PC-9 (cell line): ENCODE measurements at regions of chr18 and their contacts with region 1.

Region 1: GRCh38 chr18:9575558-9575957 is 38.8 kb downstream of the PPP4R1 start:
- DNase-seq: peak; percentile 75 to 85
- H3K4me3 ChIP-seq: no peak overlapping the region
- H3K27ac ChIP-seq: peak overlapping the region; percentile 53
- H3K4me1 ChIP-seq: peaks cover 6% of the 10 kb centered on the region
- H3K27me3 ChIP-seq: no peaks in the 10 kb centered on the region
- CTCF ChIP-seq: peak; percentile 90

Region 2: GRCh38 chr18:9565407-9565806 is 10.2 kb before region 1 on chr18:
- CTCF ChIA-PET with region 1: no interaction called
- POLR2A ChIA-PET with region 1: interaction called, 17 read pairs
- intact Hi-C with region 1: no loop called
- DNase-seq: no peak
- H3K4me3 ChIP-seq: no peak overlapping the region
- H3K27ac ChIP-seq: no peak overlapping the region
- H3K4me1 ChIP-seq: no peaks in the 10 kb centered on the region
- H3K27me3 ChIP-seq: no peaks in the 10 kb centered on the region
- CTCF ChIP-seq: no peak

Region 3: GRCh38 chr18:9661564-9661963 is 86.0 kb after region 1 on chr18:
- CTCF ChIA-PET with region 1: interaction called, 10 read pairs
- POLR2A ChIA-PET with region 1: no interaction called
- intact Hi-C with region 1: no loop called
- DNase-seq: no peak
- H3K4me3 ChIP-seq: no peak overlapping the region
- H3K27ac ChIP-seq: no peak overlapping the region
- H3K4me1 ChIP-seq: peaks cover 35% of the 10 kb centered on the region
- H3K27me3 ChIP-seq: no peaks in the 10 kb centered on the region
- CTCF ChIP-seq: no peak

Region 4: GRCh38 chr18:9683407-9684396 is 108.1 kb after region 1 on chr18:
- CTCF ChIA-PET with region 1: interaction called, 27 read pairs
- POLR2A ChIA-PET with region 1: interaction called, 3 read pairs
- intact Hi-C with region 1: loop called (anchors 1 kb)
- DNase-seq: peak; percentile 75 to 76
- H3K4me3 ChIP-seq: peak overlapping the region; percentile 15; the same call in 1 of the 2 replicates
- H3K27ac ChIP-seq: peak overlapping the region; percentile 56
- H3K4me1 ChIP-seq: peaks cover 32% of the 10 kb centered on the region
- H3K27me3 ChIP-seq: no peaks in the 10 kb centered on the region
- CTCF ChIP-seq: peak; percentile 62

Region 5: DNA sequence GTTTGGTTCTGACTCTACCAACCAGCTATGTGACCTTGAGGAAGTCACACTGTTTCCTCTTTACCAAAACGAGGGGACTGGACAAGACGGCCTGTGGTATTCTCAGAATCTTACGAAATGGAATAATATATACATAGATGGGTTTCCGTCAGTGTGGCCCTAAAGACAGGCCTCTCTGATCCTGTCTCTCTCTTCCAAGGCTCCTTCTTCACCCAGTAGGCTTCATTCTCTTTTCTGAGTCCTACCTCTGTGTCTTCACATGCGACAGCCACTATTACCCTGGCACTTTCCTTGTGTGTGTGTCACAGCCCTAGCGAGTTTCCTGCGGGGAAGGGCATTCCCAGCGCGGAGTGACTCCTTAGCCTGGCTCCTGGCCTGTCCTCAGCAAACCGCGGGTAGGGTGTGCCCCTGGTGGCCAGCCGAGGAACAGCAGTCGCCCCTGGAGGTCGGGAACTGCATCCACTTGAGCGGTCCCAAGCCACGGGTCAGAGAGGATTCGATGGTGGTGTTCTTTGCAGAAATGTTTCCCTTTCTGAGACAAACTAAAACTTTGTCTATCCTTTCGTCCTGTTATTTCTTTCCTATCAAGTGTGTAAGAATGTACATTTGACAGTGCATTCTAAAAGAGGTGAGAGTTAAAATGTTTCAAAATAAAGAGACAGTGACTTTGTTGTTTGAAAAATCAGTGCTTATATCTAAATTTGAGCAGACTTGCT is 195.9 kb after region 1 on chr18:
- CTCF ChIA-PET with region 1: no interaction called
- POLR2A ChIA-PET with region 1: no interaction called
- intact Hi-C with region 1: loop called (anchors 1 kb)
- DNase-seq: peak in 1 of 2 experiments; percentile 81
- H3K4me3 ChIP-seq: no peak overlapping the region
- H3K27ac ChIP-seq: no peak overlapping the region
- H3K4me1 ChIP-seq: peaks cover 12% of the 10 kb centered on the region
- H3K27me3 ChIP-seq: no peaks in the 10 kb centered on the region
- CTCF ChIP-seq: peak; percentile 69

Region 6: GRCh38 chr18:10525371-10526210 is 950.0 kb after region 1 on chr18 and contains the start of gene NAPG:
- CTCF ChIA-PET with region 1: no interaction called
- POLR2A ChIA-PET with region 1: no interaction called
- intact Hi-C with region 1: loop called (anchors 10 kb)
- DNase-seq: peak; percentile 83 to 93
- H3K4me3 ChIP-seq: peak within 1 kb of the TSS; percentile 98
- H3K27ac ChIP-seq: peak within 1 kb of the TSS; percentile 76
- H3K4me1 ChIP-seq: peaks cover 27% of the 10 kb centered on the region
- H3K27me3 ChIP-seq: no peaks in the 10 kb centered on the region
- CTCF ChIP-seq: no peak
- total RNA-seq, gene NAPG: 28.1 and 31.0 TPM in 2 replicates